ENCODE measurements at regions of chr7 and their contacts with region 1.

Region 1: DNA sequence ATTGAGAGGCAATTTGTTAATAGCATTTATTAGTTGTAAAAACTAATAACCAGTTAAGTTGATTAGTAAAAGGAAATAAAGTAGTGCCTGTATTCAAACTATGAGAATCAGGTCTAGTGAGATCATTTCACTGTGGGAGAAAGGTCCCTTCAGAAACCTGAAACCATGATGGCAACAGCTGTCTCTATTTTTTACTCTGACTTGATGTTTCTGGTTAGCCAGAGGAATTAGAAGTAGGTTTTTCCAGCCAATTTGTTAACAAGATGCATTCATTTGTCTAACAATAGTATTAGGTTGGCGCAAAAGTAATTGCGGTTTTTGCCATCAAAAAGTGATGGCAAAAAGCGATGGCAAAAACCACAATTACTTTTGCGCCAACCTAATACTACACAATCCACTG is 272.2 kb upstream of the YAE1 start:
- DNase-seq: no peak
- H3K4me3 ChIP-seq: no peak overlapping the region
- H3K27ac ChIP-seq: no peak overlapping the region
- H3K4me1 ChIP-seq: no peaks in the 10 kb centered on the region
- H3K27me3 ChIP-seq: no peaks in the 10 kb centered on the region
- CTCF ChIP-seq: no peak
- EP300 ChIP-seq: no peak
- POLR2A ChIP-seq: no peak
- RAD21 ChIP-seq: no peak

Region 2: GRCh38 chr7:39280337-39280736 is 13.7 kb before region 1 on chr7:
- CTCF ChIA-PET with region 1: no interaction called
- POLR2A ChIA-PET with region 1: no interaction called
- DNase-seq: no peak
- H3K4me3 ChIP-seq: no peak overlapping the region
- H3K27ac ChIP-seq: no peak overlapping the region
- H3K4me1 ChIP-seq: peaks cover 0 to 3% (median 0%) of the 10 kb centered on the region in 4 experiments; a peak in 1 of 7 replicates
- H3K27me3 ChIP-seq: no peaks in the 10 kb centered on the region
- CTCF ChIP-seq: no peak
- EP300 ChIP-seq: no peak
- POLR2A ChIP-seq: no peak
- RAD21 ChIP-seq: no peak

Region 3: GRCh38 chr7:39310699-39311098 is 16.7 kb after region 1 on chr7:
- CTCF ChIA-PET with region 1: interaction called, 15 read pairs
- POLR2A ChIA-PET with region 1: no interaction called
- DNase-seq: no peak
- H3K4me3 ChIP-seq: no peak overlapping the region
- H3K27ac ChIP-seq: no peak overlapping the region
- H3K4me1 ChIP-seq: peaks cover 2 to 14% (median 6%) of the 10 kb centered on the region in 4 experiments; a peak in 6 of 7 replicates
- H3K27me3 ChIP-seq: no peaks in the 10 kb centered on the region
- CTCF ChIP-seq: peak; percentile 26 to 45 (median 42)
- EP300 ChIP-seq: no peak
- POLR2A ChIP-seq: no peak
- RAD21 ChIP-seq: peak; percentile 61 to 72